PC-9 (cell line): ENCODE measurements at regions of chr10 and their contacts with region 1.

Region 1: GRCh38 chr10:112767156-112767555 is 182.9 kb upstream of the TCF7L2 start:
- DNase-seq: peak in 1 of 2 experiments; percentile 79
- H3K4me3 ChIP-seq: 0 out of 2 replicates have a peak overlapping the region, but pooled peaks have one; percentile 2
- H3K27ac ChIP-seq: peak overlapping the region; percentile 92
- H3K4me1 ChIP-seq: peaks cover 59% of the 10 kb centered on the region
- H3K27me3 ChIP-seq: no peaks in the 10 kb centered on the region
- CTCF ChIP-seq: no peak

Region 2: DNA sequence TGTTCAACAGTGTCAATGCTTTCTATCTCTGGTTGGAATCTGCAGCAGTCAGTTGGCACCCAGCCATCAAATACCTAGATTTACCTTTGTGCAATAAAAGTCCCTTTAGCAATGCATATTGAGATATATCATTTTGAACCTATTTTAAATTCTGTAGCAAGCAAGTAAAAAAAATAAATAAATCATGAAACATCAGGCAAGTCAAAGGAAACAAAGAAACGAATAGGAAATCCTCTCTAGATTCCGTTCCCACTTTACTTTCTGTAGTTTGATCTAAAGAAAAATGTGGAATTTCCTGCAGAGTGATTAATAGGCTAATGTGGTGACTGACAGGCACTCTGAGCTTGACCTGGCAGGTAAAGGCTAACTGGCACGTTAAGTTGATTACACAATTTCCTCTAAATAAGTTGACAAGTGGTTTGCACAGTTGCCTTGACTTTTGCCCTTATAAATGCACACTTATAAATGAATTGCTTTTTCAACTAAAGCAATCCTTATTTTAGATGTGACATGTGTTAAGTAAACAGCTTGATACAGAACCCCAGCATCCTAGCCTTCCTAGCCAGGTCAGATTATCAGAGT is 25.2 kb before region 1 on chr10:
- CTCF ChIA-PET with region 1: no interaction called
- POLR2A ChIA-PET with region 1: no interaction called
- intact Hi-C with region 1: loop called (anchors 1 kb)
- DNase-seq: peak; percentile 27 to 91
- H3K4me3 ChIP-seq: no peak overlapping the region
- H3K27ac ChIP-seq: peak overlapping the region; percentile 78
- H3K4me1 ChIP-seq: peaks cover 41% of the 10 kb centered on the region
- H3K27me3 ChIP-seq: no peaks in the 10 kb centered on the region
- CTCF ChIP-seq: no peak

Region 3: DNA sequence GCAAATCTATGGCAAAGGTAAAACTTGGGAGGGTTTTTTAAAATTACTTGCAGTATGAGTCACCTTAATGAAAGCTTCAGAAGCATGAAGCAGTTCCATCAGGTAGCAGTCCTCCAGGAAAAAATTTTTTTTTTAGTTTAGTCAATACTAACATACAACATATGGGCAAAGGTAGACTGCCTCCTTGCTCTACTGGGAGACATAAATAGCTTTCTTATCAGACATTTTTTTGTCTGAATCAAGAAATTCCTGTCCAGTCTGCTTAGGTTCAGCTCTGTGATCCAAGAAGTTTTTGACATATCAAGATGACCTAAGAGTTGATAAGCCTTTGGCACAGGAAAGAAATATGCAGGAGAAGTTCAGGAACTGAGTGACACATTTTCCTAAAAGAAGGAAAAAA is 11.4 kb after region 1 on chr10:
- CTCF ChIA-PET with region 1: no interaction called
- POLR2A ChIA-PET with region 1: no interaction called
- intact Hi-C with region 1: loop called (anchors 1 kb)
- DNase-seq: peak in 1 of 2 experiments; percentile 87
- H3K4me3 ChIP-seq: no peak overlapping the region
- H3K27ac ChIP-seq: peak overlapping the region; percentile 83
- H3K4me1 ChIP-seq: peaks cover 34% of the 10 kb centered on the region
- H3K27me3 ChIP-seq: no peaks in the 10 kb centered on the region
- CTCF ChIP-seq: no peak